Right cardiac atrium (tissue), 5 donors: ENCODE measurements at regions of chr1 and their contacts with region 1.

Region 1: DNA sequence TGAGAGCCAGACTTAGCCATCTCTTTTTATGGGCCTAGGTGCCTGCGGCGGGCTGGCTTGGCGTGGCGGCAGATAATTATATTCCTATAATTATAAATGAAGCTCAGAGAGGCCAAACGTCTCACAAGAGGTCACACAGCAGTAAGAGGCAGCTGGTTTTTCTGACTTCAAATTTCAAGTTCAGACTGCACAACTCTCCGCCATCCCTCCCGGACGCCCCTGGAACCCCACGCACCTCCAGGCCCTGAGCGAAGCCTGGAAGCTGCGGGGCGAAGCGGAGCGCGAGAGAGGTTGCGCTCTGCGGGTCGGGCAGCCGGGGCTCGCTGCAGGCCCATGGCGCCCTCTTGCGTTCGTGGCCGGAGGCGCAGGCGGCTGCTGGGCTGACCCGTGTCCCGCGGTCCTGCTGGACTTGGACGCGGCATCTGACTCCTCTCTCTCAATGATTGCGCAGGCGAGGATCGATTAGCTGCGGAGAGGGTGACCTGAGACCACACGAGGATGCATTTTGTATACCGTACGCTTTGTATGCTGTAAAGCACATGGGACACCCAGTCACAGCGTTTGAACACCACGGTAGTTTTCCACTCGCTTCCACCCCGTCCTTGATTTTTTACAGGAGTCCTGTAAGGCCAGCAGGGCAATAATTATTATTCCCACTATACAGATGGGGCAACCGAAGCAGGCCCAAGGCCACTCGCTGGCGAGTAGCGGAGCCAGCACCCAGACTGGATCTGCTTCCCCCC is 272.7 kb downstream of the FOXD2 start:
- DNase-seq: peak; percentile 71 to 93 (median 92)
- ATAC-seq: peak; percentile 89 to 90
- H3K4me3 ChIP-seq: peak overlapping the region; percentile 32
- H3K27ac ChIP-seq: no peak overlapping the region
- H3K4me1 ChIP-seq: peaks cover 3% of the 10 kb centered on the region
- H3K27me3 ChIP-seq: no peaks in the 10 kb centered on the region

Region 2: GRCh38 chr1:47179017-47179987 is 531.2 kb before region 1 on chr1:
- intact Hi-C with region 1: loop called in 3 of 4 experiments (anchors 5 to 10 kb)
- DNase-seq: peak; percentile 93 to 97 (median 96)
- ATAC-seq: peak; percentile 83 to 89
- H3K4me3 ChIP-seq: peak overlapping the region; percentile 40
- H3K27ac ChIP-seq: no peak overlapping the region
- H3K4me1 ChIP-seq: no peaks in the 10 kb centered on the region
- H3K27me3 ChIP-seq: no peaks in the 10 kb centered on the region

Region 3: DNA sequence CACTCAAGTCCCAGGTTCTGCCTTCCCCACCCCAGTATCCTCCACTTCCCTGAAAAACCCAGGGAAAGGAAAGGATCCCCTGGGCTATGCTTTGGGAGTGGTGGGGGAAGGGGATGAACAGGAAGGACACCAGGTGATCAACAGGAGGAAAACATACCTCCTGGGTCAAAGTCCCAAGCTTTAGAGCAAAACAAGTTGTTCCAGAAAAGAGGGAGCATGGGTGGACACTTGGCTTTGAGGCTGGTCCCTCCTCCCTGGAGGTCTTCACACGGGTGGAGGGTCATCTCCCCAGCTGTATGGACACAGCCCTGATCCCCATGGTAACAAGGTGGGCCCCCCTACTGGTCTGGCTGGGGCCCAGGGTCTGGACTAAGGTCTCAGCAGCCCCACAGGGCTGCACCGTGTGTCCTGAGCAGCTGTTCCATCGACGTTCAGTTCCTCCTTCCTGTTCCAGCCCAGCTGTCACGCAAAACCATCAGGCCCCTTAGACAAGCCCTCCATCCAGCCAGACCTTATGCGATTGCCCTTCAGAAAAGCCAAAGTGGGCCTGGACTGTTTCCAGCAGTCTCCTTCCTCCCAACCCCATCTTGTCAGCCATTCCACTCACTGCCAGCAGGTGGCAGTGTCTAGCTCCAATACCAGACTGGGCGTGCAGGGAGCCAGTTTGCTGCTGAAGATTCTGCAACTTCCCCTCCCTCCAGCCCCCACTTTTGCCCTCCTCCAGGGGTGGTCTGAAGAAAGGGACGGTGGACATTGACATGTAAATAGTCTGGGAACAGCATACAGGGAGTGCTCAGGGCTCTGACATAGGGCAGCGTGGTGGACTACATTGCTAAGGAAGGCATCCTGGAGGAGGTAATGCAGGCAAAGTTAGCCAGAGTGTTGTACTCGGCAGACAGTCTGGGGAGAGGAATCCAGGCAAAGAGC is 517.8 kb before region 1 on chr1:
- intact Hi-C with region 1: loop called in 3 of 4 experiments (anchors 10 kb)
- DNase-seq: peak; percentile 77 to 91 (median 91)
- ATAC-seq: peak; percentile 27 to 60
- H3K4me3 ChIP-seq: no peak overlapping the region
- H3K27ac ChIP-seq: no peak overlapping the region
- H3K4me1 ChIP-seq: peaks cover 4% of the 10 kb centered on the region
- H3K27me3 ChIP-seq: no peaks in the 10 kb centered on the region

Region 4: DNA sequence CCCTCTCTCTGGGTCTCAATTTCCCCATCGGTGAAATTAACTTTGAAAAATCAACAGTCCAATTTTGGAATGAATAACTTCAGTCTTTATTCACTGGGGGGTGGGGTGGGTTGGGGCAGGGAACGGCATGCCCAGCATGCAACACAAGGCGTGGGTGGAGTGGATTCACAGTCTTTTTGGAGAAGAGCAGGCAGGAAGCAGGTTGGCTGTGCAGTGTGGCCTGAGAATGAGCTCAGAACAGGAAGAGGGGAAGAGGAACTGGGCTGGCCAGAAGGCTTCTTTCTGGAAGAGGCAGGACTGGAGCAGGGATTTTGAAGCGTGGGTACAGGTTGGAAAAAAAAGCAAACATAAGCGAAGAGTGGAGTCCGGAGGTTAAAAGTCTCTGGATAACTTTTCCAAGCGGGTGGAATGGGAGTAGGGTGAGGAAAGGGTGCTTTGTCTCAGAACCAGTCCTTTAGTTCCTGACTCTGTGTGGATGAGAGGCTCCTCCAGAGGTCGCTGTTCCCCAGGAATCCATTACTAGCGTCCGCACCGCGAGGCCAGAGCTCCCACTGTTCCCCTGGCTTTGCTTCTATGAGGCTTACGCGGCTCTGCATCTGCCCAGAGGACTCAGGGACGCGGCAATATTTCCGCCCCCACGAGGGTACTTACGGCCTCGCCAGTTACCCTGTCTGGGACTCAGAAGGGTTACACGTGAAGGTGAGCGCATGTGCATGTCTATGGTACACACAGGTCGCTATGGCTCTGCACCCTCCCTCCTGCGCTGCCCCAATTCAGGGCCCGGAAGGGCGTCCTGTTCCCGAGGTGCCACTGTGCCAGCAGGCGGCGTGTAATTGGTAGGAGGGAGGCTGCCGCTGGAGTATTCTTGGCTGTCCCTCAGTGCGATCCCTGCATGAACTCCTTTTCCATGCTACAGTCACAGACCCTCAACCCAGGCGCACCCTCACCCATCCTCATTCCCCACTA is 278.1 kb before region 1 on chr1:
- intact Hi-C with region 1: loop called (anchors 2 to 5 kb)
- DNase-seq: peak; percentile 82 to 87 (median 86)
- ATAC-seq: peak; percentile 80
- H3K4me3 ChIP-seq: no peak overlapping the region
- H3K27ac ChIP-seq: no peak overlapping the region
- H3K4me1 ChIP-seq: no peaks in the 10 kb centered on the region
- H3K27me3 ChIP-seq: no peaks in the 10 kb centered on the region

Region 5: GRCh38 chr1:47437447-47438164 is 272.9 kb before region 1 on chr1 and contains the start of gene FOXD2:
- intact Hi-C with region 1: loop called (anchors 2 to 5 kb)
- DNase-seq: peak; percentile 86 to 94 (median 93)
- ATAC-seq: peak; percentile 95
- H3K4me3 ChIP-seq: peak within 1 kb of the TSS; percentile 84
- H3K27ac ChIP-seq: no peak within 1 kb of the TSS
- H3K4me1 ChIP-seq: no peaks in the 10 kb centered on the region
- H3K27me3 ChIP-seq: peaks cover 3% of the 10 kb centered on the region
- total RNA-seq, gene FOXD2: 0.06 to 0.08 TPM in 2 of 4 donors, not detected in the others

Region 6: DNA sequence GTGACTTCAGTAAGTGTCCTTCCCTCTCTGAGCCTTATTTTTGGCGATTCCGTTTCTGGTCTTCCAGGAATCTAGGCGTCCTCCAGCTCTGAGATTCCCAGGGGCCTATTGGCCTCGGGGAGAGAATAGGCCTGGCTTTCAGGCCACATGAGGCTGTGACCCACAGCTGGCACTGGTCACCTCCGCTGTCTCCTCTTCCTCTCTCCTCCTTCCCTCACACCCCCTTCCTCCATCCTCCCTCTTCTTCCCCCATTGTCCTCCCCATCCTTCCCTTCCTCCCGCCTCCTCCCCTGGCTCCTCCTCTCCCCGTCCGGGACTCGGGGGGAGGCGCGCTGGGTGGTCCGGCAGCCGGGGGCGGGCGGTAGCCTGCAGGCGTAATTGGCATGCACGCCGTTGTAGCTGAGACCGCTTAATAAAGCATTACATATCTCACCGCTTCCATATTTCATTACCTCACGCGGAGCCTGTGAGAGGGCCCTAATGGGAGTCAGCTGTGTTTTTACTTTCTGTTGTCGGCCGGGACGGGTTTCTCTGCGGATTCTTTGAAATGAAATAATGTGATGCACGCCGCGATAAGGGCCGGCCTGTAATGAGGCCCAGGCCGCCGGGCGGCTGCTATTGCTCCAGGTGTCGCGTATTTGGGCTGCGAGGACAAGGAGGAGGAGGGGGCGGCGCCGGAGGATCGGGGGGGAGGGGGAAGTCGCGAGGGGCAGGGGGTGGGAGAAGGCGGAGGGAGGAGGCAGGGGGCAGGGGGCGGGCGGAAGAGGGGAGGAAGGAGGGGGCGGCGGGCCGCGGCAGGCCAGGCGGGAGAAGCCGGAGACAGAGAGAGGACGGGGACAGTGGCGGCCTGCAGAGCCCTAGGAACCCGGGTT is 177.3 kb before region 1 on chr1:
- intact Hi-C with region 1: loop called in 1 of 4 experiments (anchors 10 kb)
- DNase-seq: peak; percentile 65 to 85 (median 84)
- ATAC-seq: peak; percentile 78 to 80
- H3K4me3 ChIP-seq: peak overlapping the region; percentile 50
- H3K27ac ChIP-seq: no peak overlapping the region
- H3K4me1 ChIP-seq: peaks cover 2% of the 10 kb centered on the region
- H3K27me3 ChIP-seq: no peaks in the 10 kb centered on the region